ENCODE measurements at regions of chr10 and their contacts with region 1.

Region 1: DNA sequence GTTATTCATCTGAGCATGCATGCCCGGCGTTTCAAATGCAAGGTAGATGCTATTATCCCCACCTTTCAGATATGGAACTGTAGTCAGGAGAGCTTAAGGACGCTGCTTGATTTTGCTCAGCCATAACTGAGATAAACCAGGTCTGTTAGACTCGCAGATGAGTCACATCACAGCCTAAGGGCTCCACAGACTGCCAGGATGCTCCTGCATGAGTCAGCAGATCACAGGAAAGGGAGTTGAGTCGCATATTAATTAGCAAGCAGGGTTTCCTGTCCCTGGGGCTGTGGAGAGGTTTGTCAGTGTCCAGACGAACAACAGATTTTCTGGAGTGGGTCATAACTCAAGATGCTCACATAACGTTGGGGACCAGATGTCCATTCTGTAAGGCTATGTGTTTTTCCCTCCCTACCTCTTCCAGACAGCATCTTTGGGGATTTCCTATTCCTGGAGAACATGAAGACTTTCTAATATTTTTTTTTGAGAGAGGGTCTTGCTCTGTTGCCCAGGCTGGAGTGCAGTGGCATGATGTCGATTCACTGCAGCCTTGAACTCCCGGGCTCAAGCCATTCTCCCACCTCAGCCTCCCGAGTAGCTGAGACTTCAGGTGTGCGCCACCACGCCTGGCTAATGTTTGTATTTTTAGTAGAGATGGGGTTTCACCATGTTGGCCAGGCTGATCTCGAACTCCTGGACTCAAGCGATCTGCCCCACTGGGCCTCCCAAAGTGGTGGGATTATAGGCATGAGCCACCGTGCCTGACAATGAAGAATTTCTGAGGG is 36.7 kb downstream of the PFKFB3 start:
- DNase-seq: peak in 1 of 2 donors; percentile 43
- ATAC-seq: peak; percentile 42 to 58
- H3K4me3 ChIP-seq: no peak overlapping the region
- H3K27ac ChIP-seq: peak overlapping the region; percentile 8 to 49 (median 42)
- H3K4me1 ChIP-seq: no peaks in the 10 kb centered on the region
- H3K27me3 ChIP-seq: no peaks in the 10 kb centered on the region
- CTCF ChIP-seq: no peak
- POLR2A ChIP-seq: no peak

Region 2: DNA sequence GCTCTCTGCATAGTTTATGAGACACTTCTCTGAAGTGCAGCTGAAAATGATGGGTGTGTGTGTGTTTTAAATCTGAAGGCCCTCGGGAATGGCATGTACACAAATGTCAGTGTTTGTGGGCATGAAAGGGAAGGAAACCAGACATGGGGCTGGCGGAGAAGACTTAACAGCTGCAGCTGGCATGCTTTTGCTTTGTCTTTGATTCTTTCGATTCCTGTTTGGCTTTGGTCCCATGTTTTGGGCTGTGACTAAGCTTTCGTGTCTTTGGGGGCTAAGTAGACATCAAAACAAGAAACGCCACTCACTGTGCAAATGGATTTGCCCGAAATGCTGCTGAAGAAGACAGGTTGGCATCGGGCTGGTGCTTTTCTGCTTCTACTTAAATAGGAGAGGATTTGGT is 142.7 kb after region 1 on chr10:
- in situ Hi-C with region 1: loop called in 2 of 4 experiments (anchors 25 kb)
- intact Hi-C with region 1: no loop called
- DNase-seq: no peak
- ATAC-seq: no peak
- H3K4me3 ChIP-seq: peak overlapping the region in 1 of 4 donors; percentile 6
- H3K27ac ChIP-seq: no peak overlapping the region
- H3K4me1 ChIP-seq: peaks cover 0 to 6% of the 10 kb centered on the region in 2 donors
- H3K27me3 ChIP-seq: no peaks in the 10 kb centered on the region
- CTCF ChIP-seq: no peak
- POLR2A ChIP-seq: no peak

Measured in gastrocnemius medialis (tissue), 4 donors.